ENCODE measurements at regions of chr6 and their contacts with region 1.

Region 1: GRCh38 chr6:151390276-151391032 is 905 bp downstream of the ZBTB2 start:
- DNase-seq: peak; percentile 98
- ATAC-seq: peak; percentile 83
- H3K4me3 Mint-ChIP-seq: peak overlapping the region; percentile 45
- H3K27ac Mint-ChIP-seq: peak overlapping the region; percentile 96
- H3K4me1 Mint-ChIP-seq: peaks cover 54% of the 10 kb centered on the region
- H3K27me3 Mint-ChIP-seq: no peaks in the 10 kb centered on the region

Region 2: DNA sequence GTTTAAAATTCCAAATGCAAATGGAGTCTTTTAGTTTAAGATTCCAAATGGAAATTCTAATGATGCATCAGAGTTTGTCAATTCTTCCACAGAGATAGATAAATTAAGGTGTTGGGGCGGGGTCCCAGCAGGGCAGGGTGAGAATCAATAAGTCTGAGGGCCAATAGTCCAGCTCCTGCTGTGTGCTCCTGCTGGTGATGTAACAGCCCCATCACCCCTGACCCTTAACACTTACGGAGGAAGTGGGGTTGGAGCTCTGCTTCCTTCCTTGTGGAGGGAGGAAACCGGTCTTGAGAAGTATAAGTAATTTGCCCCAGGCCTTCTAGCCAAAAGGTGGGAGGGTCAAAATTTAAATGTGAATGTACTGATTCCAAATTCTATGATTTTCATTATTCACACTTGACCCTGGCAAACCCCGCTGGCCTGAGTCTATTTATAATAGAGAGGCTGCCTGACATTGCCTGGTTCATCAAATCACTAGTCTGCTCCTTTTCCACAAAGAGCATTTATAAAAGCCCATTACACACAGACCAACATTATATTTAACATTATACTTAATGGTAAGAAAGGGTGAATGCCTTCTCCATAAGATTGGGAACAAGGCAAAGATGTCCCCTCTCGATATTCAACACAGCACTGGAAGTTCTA is 16.3 kb before region 1 on chr6:
- CTCF ChIA-PET with region 1: interaction called, 23 read pairs
- DNase-seq: peak; percentile 62
- ATAC-seq: peak; percentile 41
- H3K4me3 Mint-ChIP-seq: peak overlapping the region; percentile 69
- H3K27ac Mint-ChIP-seq: peak overlapping the region; percentile 91
- H3K4me1 Mint-ChIP-seq: peaks cover 71% of the 10 kb centered on the region
- H3K27me3 Mint-ChIP-seq: no peaks in the 10 kb centered on the region

Region 3: DNA sequence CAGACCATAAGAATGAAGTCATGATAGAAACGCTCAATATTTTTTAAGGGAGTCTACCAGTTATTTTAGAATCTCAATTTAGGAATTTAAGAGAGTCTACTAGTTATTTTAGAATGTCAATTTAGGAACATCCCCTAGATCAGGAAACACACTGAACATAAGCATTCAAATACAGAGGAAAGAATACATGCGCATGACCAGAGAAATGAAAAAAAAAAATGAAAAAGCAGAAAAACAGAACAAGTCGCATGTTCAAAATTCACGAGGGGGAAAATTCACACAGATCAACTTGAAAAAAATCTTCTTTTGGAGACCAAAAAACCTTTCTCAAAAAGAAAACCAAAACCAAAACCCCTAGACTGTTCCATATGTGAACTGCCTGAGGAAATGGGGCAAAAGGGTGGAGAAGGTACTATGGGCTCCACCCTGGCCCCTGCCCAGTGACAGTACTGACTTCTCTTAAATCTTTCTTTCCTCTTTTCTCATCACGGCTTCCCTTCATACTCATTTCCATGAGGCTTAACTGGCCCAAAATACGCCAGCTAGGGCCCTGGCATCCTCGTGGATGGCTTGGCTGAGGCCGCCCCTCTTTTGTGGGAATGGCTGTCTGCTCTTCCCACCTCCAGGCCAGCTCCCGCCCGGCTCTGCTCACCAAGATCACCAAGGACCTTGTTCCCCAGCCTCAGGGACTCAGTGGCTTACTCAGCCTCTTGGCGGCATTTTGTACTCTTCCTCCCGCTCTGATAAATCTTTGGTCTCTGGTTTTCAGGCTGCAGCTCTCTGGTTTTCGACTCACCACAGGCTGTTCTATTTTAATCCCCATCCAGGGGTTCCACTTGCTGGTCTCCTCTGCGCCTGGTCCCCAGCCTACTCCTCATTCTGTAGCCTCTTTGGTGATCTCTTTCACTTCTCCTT is 10.3 kb before region 1 on chr6:
- CTCF ChIA-PET with region 1: interaction called, 23 read pairs
- DNase-seq: peak; percentile 65
- ATAC-seq: peak; percentile 79
- H3K4me3 Mint-ChIP-seq: peak overlapping the region; percentile 80
- H3K27ac Mint-ChIP-seq: peak overlapping the region; percentile 95
- H3K4me1 Mint-ChIP-seq: peaks cover 61% of the 10 kb centered on the region
- H3K27me3 Mint-ChIP-seq: no peaks in the 10 kb centered on the region

Region 4: GRCh38 chr6:151409260-151409659 is 18.8 kb after region 1 on chr6:
- CTCF ChIA-PET with region 1: interaction called, 20 read pairs
- DNase-seq: no peak
- ATAC-seq: no peak
- H3K4me3 Mint-ChIP-seq: no peak overlapping the region
- H3K27ac Mint-ChIP-seq: peak overlapping the region; percentile 2
- H3K4me1 Mint-ChIP-seq: peaks cover 10% of the 10 kb centered on the region
- H3K27me3 Mint-ChIP-seq: no peaks in the 10 kb centered on the region

Region 5: DNA sequence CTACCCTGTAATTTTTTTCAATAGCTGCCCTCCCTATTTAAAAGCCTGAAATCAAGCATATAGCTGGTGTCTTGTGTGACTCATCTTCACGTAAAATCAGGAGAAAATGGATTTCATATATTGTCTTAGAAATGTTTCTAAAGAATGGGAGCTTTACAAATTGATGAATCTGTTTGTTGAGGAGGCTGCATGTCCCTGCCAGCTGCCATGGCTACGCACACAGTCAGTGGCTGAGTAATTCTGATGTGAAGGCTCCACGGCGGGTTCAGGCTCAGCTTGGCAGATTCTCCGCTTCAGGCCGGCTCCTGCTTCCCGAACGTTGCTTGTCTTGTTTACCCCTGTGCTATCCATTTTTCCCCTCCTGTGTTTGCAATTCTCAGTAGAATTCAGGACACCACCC is 186.2 kb after region 1 on chr6:
- CTCF ChIA-PET with region 1: no interaction called
- DNase-seq: no peak
- ATAC-seq: no peak
- H3K4me3 Mint-ChIP-seq: no peak overlapping the region
- H3K27ac Mint-ChIP-seq: no peak overlapping the region
- H3K4me1 Mint-ChIP-seq: no peaks in the 10 kb centered on the region
- H3K27me3 Mint-ChIP-seq: peaks cover 10% of the 10 kb centered on the region

Measured in activated CD8-positive, alpha-beta memory T cell treated with anti-CD3 and anti-CD28 coated beads, Interleukin-2, amount 10 ng/mL, durations not matched to agents 7 days and 5 days (primary cell).